AG04449 (cell line): ENCODE measurements at regions of chr13 and their contacts with region 1.

Region 1: DNA sequence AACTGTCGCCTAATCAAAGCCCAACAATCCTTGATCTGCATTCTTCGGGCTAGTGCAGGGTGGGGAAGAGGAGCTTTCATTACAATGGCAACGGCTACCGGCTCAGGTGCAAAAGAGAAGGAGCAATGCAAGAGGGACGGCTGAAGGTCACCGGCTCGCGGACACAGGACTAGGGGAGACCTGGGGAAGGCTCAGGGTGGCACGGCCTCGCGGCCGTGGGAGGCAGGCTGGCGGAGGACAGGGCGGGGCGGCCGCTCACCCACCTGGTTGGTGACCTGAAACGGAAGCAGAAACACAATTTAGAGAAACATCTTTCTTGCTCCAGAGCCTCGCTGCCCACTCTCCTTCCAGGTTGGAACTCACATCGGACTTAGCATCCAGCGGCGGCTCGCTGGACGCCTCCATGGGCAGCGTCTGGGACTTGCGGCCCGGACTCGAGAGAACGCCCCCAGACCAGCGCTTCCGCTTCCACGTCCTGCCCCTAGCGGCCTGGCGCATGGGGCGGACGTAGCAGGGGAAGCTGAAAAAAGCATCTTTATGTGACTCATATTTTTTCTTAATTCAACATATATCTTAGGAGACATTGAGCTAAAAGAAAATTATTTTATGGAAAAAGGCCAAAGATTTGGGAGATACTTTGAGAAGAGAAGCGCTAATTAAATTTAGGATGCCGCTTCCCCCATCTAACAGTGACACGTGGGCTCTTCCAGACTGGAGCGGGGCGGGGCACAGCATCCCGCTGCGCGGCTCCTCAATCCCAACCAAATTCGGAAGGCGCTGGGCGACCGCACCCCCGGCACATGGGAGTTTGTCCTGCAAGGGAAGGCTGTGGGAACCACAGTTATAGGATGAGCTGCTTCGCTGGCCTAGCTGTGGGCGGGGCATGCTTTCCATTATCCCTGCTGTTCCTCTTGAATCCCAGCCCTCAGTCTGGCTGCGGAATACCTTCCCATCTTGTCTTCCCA is at the start of gene COMMD6:
- DNase-seq: peak; percentile 85
- H3K4me3 ChIP-seq: peak within 1 kb of the TSS; percentile 78
- CTCF ChIP-seq: peak; percentile 51

Region 2: GRCh38 chr13:75512253-75512652 is 25.4 kb before region 1 on chr13:
- CTCF ChIA-PET with region 1: interaction called, 16 read pairs
- POLR2A ChIA-PET with region 1: interaction called, 3 read pairs
- DNase-seq: no peak
- H3K4me3 ChIP-seq: no peak overlapping the region
- CTCF ChIP-seq: no peak

Region 3: GRCh38 chr13:75549262-75550158 is 11.8 kb after region 1 on chr13 and contains the start of gene UCHL3:
- CTCF ChIA-PET with region 1: interaction called, 56 read pairs
- POLR2A ChIA-PET with region 1: interaction called, 31 read pairs
- DNase-seq: peak; percentile 59
- H3K4me3 ChIP-seq: peak within 1 kb of the TSS; percentile 91
- CTCF ChIP-seq: peak; percentile 99